Naive thymus-derived CD8-positive, alpha-beta T cell (primary cell): ENCODE measurements at regions of chr14 and their contacts with region 1.

Region 1: GRCh38 chr14:87992718-87993628 is at the start of gene GALC:
- DNase-seq: peak; percentile 87 to 97 (median 94)
- ATAC-seq: peak; percentile 84 to 88
- H3K4me3 Mint-ChIP-seq: peak within 1 kb of the TSS; percentile 83 to 99 (median 97)
- H3K27ac Mint-ChIP-seq: peak within 1 kb of the TSS; percentile 99 to 100 (median 99)
- H3K4me1 Mint-ChIP-seq: peaks cover 43 to 80% (median 69%) of the 10 kb centered on the region in 4 donors
- H3K27me3 Mint-ChIP-seq: no peaks in the 10 kb centered on the region
- polyA plus RNA-seq, gene GALC: 8.1 to 18.7 (median 9.0) TPM

Region 2: DNA sequence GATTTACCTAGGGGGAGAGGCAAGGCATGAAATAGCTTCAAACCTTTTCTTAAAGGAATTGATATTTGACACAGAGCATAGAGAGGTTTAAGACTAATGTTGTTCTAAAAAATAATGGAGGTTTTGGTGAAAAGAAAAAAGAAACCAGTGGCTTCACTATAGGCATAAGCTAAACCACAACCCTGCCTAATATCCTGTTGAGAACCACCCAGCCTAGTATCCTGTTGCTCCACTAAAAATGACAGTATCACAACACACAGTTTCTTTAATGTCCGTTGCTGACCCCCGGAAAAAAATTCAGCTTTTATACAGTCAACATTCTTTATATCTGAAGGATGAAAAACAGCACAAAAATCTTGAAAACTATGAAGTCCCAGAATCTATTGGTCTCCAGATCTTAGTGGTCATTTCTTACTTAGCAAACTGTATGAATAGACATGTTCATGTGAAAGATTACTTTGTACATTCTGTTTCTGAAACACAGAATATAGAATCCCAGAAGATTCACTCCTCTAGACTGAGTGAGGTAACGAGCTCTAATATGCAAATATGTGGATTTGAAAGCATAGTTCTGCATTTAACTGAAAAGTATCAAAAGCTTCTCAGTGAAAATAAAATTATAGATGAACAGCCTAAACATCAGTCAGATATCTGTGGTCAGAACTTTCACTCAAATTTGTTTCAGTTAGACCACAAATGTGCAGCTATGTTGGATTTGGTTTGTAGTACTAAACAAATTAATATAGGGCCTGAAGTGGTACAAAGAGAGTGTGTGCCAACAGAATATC is 40.5 kb before region 1 on chr14:
- POLR2A ChIA-PET with region 1: interaction called, 22 read pairs
- DNase-seq: peak in 3 of 10 donors; percentile 8 to 26 (median 25)
- ATAC-seq: peak; percentile 58 to 76
- H3K4me3 Mint-ChIP-seq: peak overlapping the region; percentile 47 to 82 (median 73)
- H3K27ac Mint-ChIP-seq: peak overlapping the region; percentile 77 to 98 (median 91)
- H3K4me1 Mint-ChIP-seq: peaks cover 21 to 64% (median 47%) of the 10 kb centered on the region in 4 donors
- H3K27me3 Mint-ChIP-seq: no peaks in the 10 kb centered on the region

Region 3: DNA sequence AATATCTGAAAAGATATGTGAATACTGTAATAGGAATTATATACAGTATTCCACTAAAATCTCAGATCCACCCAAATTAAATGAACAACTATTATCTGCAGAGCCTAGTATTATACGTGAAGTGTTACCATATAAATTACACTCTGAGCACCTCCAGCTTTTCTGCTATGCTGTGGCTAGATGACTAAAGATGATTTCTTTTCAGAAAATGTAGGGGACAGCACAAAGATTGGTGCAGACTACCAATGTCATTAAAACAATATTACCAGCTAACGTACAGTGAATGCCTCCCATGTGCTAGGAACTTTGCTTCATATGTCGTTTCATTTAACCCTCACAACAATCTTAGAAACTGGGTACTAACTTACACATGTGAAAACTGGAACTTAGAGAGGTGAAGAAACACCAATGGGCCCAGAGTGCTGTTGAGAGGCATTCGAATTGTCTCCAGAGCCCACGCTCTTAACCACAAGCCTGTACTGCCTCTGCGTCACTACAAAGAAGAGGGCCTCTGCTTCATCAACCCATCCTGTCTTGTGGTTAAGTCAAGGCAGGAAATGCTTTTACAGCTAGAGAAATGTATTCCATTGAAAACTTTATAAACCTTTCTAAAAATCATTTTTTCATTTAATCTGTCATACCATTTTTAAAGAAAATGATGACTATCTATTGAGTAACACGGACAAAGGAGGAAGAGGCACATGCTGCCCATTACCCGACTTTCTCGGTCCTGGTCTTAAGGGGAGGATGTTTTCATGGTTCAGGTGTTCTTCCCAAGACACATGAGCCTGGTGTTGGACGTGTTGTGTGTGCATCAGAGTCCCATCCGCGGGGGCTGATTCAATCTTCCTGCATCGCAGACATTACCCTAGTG is 13.2 kb after region 1 on chr14:
- POLR2A ChIA-PET with region 1: interaction called, 125 read pairs
- DNase-seq: peak; percentile 11 to 89 (median 73)
- ATAC-seq: peak; percentile 92
- H3K4me3 Mint-ChIP-seq: peak overlapping the region; percentile 85 to 98 (median 94)
- H3K27ac Mint-ChIP-seq: peak overlapping the region; percentile 80 to 99 (median 96)
- H3K4me1 Mint-ChIP-seq: peaks cover 43 to 83% (median 69%) of the 10 kb centered on the region in 4 donors
- H3K27me3 Mint-ChIP-seq: no peaks in the 10 kb centered on the region

Region 4: GRCh38 chr14:88013750-88014349 is 20.9 kb after region 1 on chr14:
- POLR2A ChIA-PET with region 1: interaction called, 11 read pairs
- DNase-seq: peak in 3 of 10 donors; percentile 19 to 63 (median 26)
- ATAC-seq: peak; percentile 38 to 64
- H3K4me3 Mint-ChIP-seq: peak overlapping the region in 7 of 10 donors; percentile 2 to 82 (median 33)
- H3K27ac Mint-ChIP-seq: peak overlapping the region; percentile 53 to 96 (median 80)
- H3K4me1 Mint-ChIP-seq: peaks cover 41 to 88% (median 74%) of the 10 kb centered on the region in 4 donors
- H3K27me3 Mint-ChIP-seq: no peaks in the 10 kb centered on the region

Region 5: GRCh38 chr14:88026890-88027289 is 33.9 kb after region 1 on chr14:
- POLR2A ChIA-PET with region 1: interaction called, 18 read pairs
- DNase-seq: peak in 3 of 10 donors; percentile 34 to 56 (median 50)
- ATAC-seq: peak; percentile 66 to 69
- H3K4me3 Mint-ChIP-seq: peak overlapping the region; percentile 51 to 83 (median 75)
- H3K27ac Mint-ChIP-seq: peak overlapping the region; percentile 73 to 96 (median 87)
- H3K4me1 Mint-ChIP-seq: peaks cover 58 to 96% (median 88%) of the 10 kb centered on the region in 4 donors
- H3K27me3 Mint-ChIP-seq: no peaks in the 10 kb centered on the region

Region 6: GRCh38 chr14:88137327-88137726 is 144.4 kb after region 1 on chr14:
- POLR2A ChIA-PET with region 1: no interaction called
- DNase-seq: no peak
- ATAC-seq: no peak
- H3K4me3 Mint-ChIP-seq: no peak overlapping the region
- H3K27ac Mint-ChIP-seq: peak overlapping the region in 1 of 10 donors; percentile 54
- H3K4me1 Mint-ChIP-seq: peaks cover 0 to 6% (median 2%) of the 10 kb centered on the region in 4 donors
- H3K27me3 Mint-ChIP-seq: peaks cover 0 to 18% (median 2%) of the 10 kb centered on the region in 5 donors